PC-3 (cell line): ENCODE measurements at regions of chr3 and their contacts with region 1.

Region 1: DNA sequence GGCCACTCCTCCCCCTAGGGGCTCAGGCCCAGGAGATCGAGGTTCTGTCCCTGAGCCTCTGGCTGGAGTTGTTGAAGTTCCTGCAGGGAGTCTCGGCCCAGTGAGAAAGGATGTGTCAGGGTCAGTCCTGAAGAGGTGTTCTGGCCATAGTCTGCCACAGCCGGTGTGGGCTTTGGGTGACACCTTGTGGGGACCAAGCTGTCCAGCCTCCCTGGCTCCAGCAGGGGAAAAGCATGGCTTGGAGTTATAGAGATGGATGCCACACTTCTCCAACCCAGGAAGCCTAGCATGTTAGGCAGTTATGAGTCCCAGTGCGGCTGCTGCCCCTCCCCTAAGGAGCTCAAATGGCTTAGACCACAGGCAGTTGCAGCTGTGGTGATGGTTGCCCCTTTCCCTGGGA is 945.6 kb upstream of the GBE1 start:
- DNase-seq: peak; percentile 51
- ATAC-seq: peak; percentile 99
- H3K4me3 ChIP-seq: no peak overlapping the region
- H3K27ac ChIP-seq: no peak overlapping the region
- H3K4me1 ChIP-seq: no peaks in the 10 kb centered on the region
- H3K27me3 ChIP-seq: no peaks in the 10 kb centered on the region
- CTCF ChIP-seq: peak; percentile 53

Region 2: GRCh38 chr3:81871358-81872155 is 835.5 kb before region 1 on chr3:
- CTCF ChIA-PET with region 1: no interaction called
- POLR2A ChIA-PET with region 1: no interaction called
- intact Hi-C with region 1: loop called (anchors 1 kb)
- DNase-seq: peak; percentile 19
- ATAC-seq: no peak
- H3K4me3 ChIP-seq: no peak overlapping the region
- H3K27ac ChIP-seq: no peak overlapping the region
- H3K4me1 ChIP-seq: no peaks in the 10 kb centered on the region
- H3K27me3 ChIP-seq: no peaks in the 10 kb centered on the region
- CTCF ChIP-seq: peak; percentile 65

Region 3: DNA sequence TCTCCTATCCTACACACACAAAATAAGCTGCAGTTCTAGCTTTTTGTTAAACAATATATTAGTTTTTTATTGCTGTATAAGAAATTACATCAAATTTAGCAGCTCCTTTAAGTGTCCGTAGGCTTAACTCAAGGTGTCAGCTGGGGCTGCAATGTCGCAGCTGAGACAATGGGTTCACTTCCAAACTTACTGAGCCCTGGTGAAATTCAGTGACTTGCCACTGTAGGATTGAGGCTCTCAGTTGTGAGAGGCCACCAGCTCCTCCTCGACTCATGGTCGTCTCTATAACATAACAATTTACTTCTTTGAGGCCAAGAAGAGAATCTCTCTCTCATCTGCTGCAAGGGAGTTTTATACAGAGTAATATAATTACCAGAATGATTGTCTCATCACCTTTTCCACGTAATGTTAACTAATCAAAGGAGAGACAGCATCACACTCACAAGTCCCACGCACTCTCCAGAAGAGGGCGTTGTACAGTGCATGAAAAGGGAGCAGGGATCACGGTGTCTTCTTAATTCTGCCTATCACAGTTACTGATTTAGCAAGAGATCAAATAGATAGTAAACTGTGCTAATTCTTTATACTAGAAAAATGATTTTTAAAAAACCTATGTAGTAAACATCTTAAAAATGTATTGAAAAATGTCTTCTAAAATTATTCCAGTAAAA is 210.0 kb before region 1 on chr3:
- CTCF ChIA-PET with region 1: no interaction called
- POLR2A ChIA-PET with region 1: no interaction called
- intact Hi-C with region 1: loop called (anchors 1 kb)
- DNase-seq: peak; percentile 58
- ATAC-seq: peak; percentile 70
- H3K4me3 ChIP-seq: no peak overlapping the region
- H3K27ac ChIP-seq: no peak overlapping the region
- H3K4me1 ChIP-seq: no peaks in the 10 kb centered on the region
- H3K27me3 ChIP-seq: no peaks in the 10 kb centered on the region
- CTCF ChIP-seq: peak; percentile 85

Region 4: GRCh38 chr3:82643948-82644347 is 63.1 kb before region 1 on chr3:
- CTCF ChIA-PET with region 1: no interaction called
- POLR2A ChIA-PET with region 1: no interaction called
- intact Hi-C with region 1: loop called (anchors 1 kb)
- DNase-seq: peak; percentile 51
- ATAC-seq: peak; percentile 92
- H3K4me3 ChIP-seq: no peak overlapping the region
- H3K27ac ChIP-seq: no peak overlapping the region
- H3K4me1 ChIP-seq: 0 out of 2 replicates have a peak, but pooled peaks cover 4% of the 10 kb centered on the region
- H3K27me3 ChIP-seq: no peaks in the 10 kb centered on the region
- CTCF ChIP-seq: peak; percentile 55

Region 5: DNA sequence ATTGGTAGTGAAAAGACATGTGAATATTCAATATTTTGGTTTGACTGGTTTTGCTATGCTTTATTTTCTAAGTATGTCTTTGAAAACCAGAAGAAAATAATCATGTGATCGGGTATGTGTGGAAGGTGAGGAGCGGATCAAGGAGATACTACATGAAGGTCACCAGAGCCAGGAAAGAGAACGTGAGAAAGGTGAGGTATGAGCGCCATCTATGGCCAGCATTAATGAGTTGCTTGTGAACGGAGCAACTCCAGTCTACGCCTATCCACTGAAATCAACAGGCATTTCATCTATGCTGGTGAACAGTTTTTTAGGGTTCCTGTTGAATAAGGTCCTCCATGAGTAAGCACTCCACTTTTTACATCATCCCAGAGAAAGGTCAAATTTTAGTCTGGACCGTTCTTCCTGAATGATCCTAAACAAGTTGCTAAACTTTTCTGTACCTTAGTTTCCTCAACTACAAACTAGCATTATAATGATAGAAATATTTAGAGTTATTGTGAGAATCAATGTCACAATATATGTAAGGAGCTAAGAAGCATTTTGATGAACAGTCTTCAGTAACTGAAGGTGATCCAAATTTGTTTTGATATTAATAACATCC is 816.5 kb after region 1 on chr3:
- CTCF ChIA-PET with region 1: no interaction called
- POLR2A ChIA-PET with region 1: no interaction called
- intact Hi-C with region 1: loop called (anchors 1 kb)
- DNase-seq: peak; percentile 84
- ATAC-seq: peak; percentile 99
- H3K4me3 ChIP-seq: no peak overlapping the region
- H3K27ac ChIP-seq: no peak overlapping the region
- H3K4me1 ChIP-seq: no peaks in the 10 kb centered on the region
- H3K27me3 ChIP-seq: no peaks in the 10 kb centered on the region
- CTCF ChIP-seq: peak; percentile 92